ENCODE measurements at regions of chr2 and their contacts with region 1.

Region 1: DNA sequence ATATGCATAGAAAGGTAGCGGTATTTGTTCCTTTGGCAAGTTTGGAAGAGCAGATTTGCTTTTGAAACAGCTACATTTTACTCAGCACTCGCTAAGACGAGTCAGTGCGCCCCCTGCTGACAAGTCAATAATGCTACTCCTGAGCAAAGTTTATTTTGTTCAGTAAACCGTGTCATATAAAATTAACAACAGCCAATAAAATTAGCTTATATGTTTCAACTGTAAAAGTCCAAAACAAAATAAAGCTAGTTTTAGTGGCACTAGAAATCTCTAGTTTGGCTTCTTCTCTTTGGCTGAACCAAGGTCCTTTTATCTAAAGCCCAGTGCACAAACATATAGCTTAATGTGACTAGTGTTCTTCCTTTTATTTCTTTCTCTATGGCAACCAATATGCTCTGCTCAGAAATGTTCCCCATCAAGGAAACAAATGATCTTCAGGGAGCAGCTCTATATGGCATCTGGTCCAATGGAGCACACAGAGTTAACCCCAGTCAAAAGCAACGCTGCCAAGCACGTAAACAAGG is 4.2 kb upstream of the POU3F3 start:
- DNase-seq: peak; percentile 85
- H3K4me3 Mint-ChIP-seq: no peak overlapping the region
- H3K27ac Mint-ChIP-seq: no peak overlapping the region
- H3K4me1 Mint-ChIP-seq: peaks cover 33% of the 10 kb centered on the region
- H3K27me3 Mint-ChIP-seq: peaks cover 90% of the 10 kb centered on the region

Region 2: DNA sequence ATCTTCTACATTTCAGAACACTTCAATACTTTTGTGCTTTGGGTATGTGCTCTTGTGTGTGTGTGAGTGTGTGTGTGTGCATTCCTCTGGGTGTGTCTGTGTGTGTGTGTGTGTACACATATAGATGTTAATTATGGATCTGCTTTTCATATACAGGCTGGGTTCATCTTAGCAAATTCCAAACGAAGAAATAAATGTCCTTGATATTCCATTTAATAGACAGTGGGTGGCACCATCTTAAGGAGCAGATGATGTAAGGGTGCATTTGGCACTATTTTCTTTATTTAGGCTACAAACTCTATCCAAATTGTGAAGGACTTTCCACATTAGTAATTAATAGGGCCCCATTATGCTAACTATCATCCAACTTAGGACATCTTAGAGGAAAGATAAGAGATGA is 421.5 kb before region 1 on chr2:
- CTCF ChIA-PET with region 1: no interaction called
- intact Hi-C with region 1: loop called (anchors 5 kb)
- DNase-seq: no peak
- H3K4me3 Mint-ChIP-seq: no peak overlapping the region
- H3K27ac Mint-ChIP-seq: no peak overlapping the region
- H3K4me1 Mint-ChIP-seq: peaks cover 1% of the 10 kb centered on the region
- H3K27me3 Mint-ChIP-seq: peaks cover 17% of the 10 kb centered on the region

Region 3: GRCh38 chr2:104862058-104862941 is 12.6 kb after region 1 on chr2:
- CTCF ChIA-PET with region 1: interaction called, 20 read pairs
- intact Hi-C with region 1: no loop called
- DNase-seq: no peak
- H3K4me3 Mint-ChIP-seq: peak overlapping the region; percentile 9
- H3K27ac Mint-ChIP-seq: no peak overlapping the region
- H3K4me1 Mint-ChIP-seq: peaks cover 10% of the 10 kb centered on the region
- H3K27me3 Mint-ChIP-seq: peaks cover 81% of the 10 kb centered on the region

Region 4: GRCh38 chr2:104872866-104873688 is 23.4 kb after region 1 on chr2:
- CTCF ChIA-PET with region 1: interaction called, 19 read pairs
- intact Hi-C with region 1: loop called (anchors 2 kb)
- DNase-seq: peak; percentile 73
- H3K4me3 Mint-ChIP-seq: peak overlapping the region; percentile 62
- H3K27ac Mint-ChIP-seq: no peak overlapping the region
- H3K4me1 Mint-ChIP-seq: peaks cover 9% of the 10 kb centered on the region
- H3K27me3 Mint-ChIP-seq: peaks cover 72% of the 10 kb centered on the region

Region 5: DNA sequence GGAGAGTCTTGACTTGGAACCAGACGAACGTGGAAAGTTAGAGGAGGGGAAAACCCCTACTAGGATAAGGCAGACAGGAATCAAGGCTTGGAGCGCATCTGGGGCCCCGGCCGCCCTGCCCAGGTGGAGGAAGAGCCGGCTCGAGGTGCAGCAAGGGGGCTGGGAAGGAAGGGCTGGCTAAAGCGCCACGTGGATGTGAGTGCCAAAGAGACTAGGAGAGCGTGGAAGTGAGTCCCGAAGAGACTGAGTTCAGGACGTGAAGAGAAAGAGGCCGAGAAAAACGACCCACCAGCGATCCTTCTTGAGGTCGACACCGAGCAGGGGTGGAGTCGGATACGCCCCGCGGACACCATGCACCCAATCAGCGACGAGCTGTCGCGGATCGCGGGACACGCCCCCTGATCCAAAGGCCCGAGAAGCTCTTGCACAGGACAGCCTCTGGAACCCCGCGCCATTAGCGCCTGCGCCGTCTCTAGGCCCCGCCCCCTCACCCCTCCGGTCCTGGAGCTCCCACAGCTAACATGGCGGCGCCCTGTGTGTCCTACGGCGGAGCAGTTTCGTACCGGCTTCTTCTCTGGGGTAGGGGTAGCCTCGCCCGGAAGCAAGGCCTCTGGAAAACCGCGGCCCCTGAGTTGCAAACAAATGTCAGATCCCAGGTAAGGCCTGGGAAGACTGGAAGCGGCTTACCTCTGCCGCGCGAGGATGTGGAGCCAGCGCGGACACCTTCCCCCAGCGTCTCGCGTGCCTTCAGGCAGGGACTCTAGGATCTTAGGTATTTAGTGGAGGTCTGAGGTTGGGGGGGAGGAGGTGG is 188.1 kb after region 1 on chr2 and contains the start of gene MRPS9:
- CTCF ChIA-PET with region 1: interaction called, 3 read pairs
- intact Hi-C with region 1: loop called (anchors 5 kb)
- DNase-seq: peak; percentile 98
- H3K4me3 Mint-ChIP-seq: peak within 1 kb of the TSS; percentile 98
- H3K27ac Mint-ChIP-seq: peak within 1 kb of the TSS; percentile 88
- H3K4me1 Mint-ChIP-seq: peaks cover 30% of the 10 kb centered on the region
- H3K27me3 Mint-ChIP-seq: no peaks in the 10 kb centered on the region
- total RNA-seq, gene MRPS9: 42.1 to 45.3 TPM

Region 6: GRCh38 chr2:105235388-105236054 is 385.8 kb after region 1 on chr2:
- CTCF ChIA-PET with region 1: interaction called, 3 read pairs
- intact Hi-C with region 1: loop called (anchors 5 kb)
- DNase-seq: peak; percentile 85
- H3K4me3 Mint-ChIP-seq: no peak overlapping the region
- H3K27ac Mint-ChIP-seq: no peak overlapping the region
- H3K4me1 Mint-ChIP-seq: peaks cover 24% of the 10 kb centered on the region
- H3K27me3 Mint-ChIP-seq: peaks cover 7% of the 10 kb centered on the region